AG04449 (cell line): ENCODE measurements at regions of chr9 and their contacts with region 1.

Region 1: GRCh38 chr9:33024966-33025571 is at the start of gene DNAJA1:
- DNase-seq: peak; percentile 42
- H3K4me3 ChIP-seq: peak within 1 kb of the TSS; percentile 99
- CTCF ChIP-seq: no peak

Region 2: GRCh38 chr9:33012328-33013069 is 12.6 kb before region 1 on chr9:
- CTCF ChIA-PET with region 1: interaction called, 3 read pairs
- POLR2A ChIA-PET with region 1: interaction called, 27 read pairs
- DNase-seq: no peak
- H3K4me3 ChIP-seq: no peak overlapping the region
- CTCF ChIP-seq: no peak

Region 3: GRCh38 chr9:33044127-33044673 is 19.1 kb after region 1 on chr9:
- CTCF ChIA-PET with region 1: interaction called, 4 read pairs
- POLR2A ChIA-PET with region 1: interaction called, 36 read pairs
- DNase-seq: peak; percentile 38
- H3K4me3 ChIP-seq: peak overlapping the region; percentile 67
- CTCF ChIP-seq: no peak

Region 4: GRCh38 chr9:33065157-33066076 is 40.3 kb after region 1 on chr9:
- CTCF ChIA-PET with region 1: no interaction called
- POLR2A ChIA-PET with region 1: interaction called, 10 read pairs
- DNase-seq: no peak
- H3K4me3 ChIP-seq: no peak overlapping the region
- CTCF ChIP-seq: no peak

Region 5: GRCh38 chr9:33076358-33077004 is 51.4 kb after region 1 on chr9 and contains the start of gene SMU1:
- CTCF ChIA-PET with region 1: no interaction called
- POLR2A ChIA-PET with region 1: interaction called, 14 read pairs
- DNase-seq: peak; percentile 69
- H3K4me3 ChIP-seq: peak within 1 kb of the TSS; percentile 98
- CTCF ChIP-seq: no peak

Region 6: GRCh38 chr9:33233681-33234473 is 208.8 kb after region 1 on chr9:
- CTCF ChIA-PET with region 1: no interaction called
- POLR2A ChIA-PET with region 1: interaction called, 16 read pairs
- DNase-seq: peak; percentile 88
- H3K4me3 ChIP-seq: no peak overlapping the region
- CTCF ChIP-seq: no peak